Mammary epithelial cell (primary cell): ENCODE measurements at regions of chr4 and their contacts with region 1.

Region 1: DNA sequence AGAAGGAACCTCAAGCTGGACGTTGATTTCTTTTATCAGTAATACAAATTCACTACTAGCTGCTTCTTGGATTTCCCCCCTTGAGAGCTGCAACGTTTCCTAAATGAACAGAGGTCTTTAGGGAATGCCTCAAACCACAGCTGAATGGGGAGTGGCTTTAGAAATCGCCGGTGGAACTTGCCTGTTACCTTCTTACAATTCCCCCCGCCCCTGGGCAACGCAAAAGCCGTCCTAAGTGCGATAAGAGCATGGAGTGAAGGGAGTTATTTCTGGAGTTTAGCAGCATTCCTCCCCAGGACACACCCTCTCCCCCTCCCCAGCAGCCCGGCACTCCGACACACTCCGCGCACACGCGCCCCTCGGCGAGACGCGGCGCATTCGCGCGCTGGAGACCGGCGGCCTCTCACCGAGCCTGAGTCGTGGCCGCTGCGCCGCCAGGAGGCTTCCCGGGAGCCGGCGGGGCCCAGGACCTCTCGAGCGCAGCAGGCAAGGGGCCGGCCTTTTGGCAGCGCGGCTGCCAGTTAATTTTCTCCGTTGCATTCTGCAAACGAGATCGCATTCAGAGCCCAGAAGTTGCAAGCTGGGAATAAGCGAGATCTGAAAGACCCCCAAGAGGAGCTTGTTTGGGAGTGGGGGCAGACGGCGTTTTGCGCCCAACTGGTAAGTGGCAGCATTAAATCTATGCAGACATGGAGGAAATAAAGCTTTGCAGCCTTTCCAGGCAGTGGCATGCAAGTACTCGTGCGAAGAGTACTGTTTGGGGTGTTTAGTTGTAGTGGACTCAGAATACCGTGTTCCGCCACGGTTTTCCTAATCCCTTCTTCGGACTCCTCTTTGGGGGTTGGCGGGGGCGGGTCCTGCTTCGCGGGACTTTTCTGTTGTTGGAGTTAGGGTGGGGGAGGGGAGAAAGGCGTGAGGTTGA is 134.7 kb downstream of the PALLD start:
- DNase-seq: peak; percentile 80
- H3K4me3 ChIP-seq: peak overlapping the region; percentile 56 to 62 (median 61)
- H3K27ac ChIP-seq: peak overlapping the region; percentile 66
- H3K4me1 ChIP-seq: peaks cover 48% of the 10 kb centered on the region
- H3K27me3 ChIP-seq: no peaks in the 10 kb centered on the region
- CTCF ChIP-seq: peak; percentile 19 to 53

Region 2: DNA sequence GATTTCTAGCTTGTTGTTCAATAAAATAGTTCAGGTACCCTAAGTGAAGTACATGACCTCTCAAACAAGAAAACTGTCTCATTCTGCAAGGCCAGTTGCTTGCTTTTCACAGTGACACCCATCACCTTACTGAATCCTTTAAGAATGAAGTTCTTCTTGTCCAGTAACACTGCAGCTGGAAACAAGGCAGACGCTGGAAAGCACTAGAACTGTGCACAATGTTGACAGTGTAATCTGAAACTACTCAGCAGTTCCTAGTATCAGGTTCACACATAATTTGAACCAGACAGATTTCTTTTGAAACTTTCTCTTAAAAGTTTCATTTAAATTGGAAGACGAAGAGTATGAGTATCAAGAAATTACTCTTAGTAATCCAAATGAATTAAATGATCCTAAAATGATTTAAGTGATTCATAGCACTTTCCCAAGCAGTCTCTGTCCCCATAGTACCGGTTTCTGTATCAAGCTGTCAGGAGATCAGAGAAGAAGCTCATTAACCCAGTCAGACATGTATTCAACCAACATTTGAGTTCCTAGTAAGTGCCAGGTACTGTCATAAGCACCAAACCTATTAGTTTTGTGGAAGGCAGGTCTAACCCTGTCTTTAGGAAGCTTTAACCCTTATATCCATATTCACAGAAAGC is 71.2 kb before region 1 on chr4:
- CTCF ChIA-PET with region 1: no interaction called
- dilution Hi-C with region 1: loop called (anchors 5 kb)
- in situ Hi-C with region 1: no loop called
- intact Hi-C with region 1: no loop called
- DNase-seq: peak; percentile 54
- H3K4me3 ChIP-seq: no peak overlapping the region
- H3K27ac ChIP-seq: no peak overlapping the region
- H3K4me1 ChIP-seq: peaks cover 37% of the 10 kb centered on the region
- H3K27me3 ChIP-seq: no peaks in the 10 kb centered on the region
- CTCF ChIP-seq: no peak

Region 3: DNA sequence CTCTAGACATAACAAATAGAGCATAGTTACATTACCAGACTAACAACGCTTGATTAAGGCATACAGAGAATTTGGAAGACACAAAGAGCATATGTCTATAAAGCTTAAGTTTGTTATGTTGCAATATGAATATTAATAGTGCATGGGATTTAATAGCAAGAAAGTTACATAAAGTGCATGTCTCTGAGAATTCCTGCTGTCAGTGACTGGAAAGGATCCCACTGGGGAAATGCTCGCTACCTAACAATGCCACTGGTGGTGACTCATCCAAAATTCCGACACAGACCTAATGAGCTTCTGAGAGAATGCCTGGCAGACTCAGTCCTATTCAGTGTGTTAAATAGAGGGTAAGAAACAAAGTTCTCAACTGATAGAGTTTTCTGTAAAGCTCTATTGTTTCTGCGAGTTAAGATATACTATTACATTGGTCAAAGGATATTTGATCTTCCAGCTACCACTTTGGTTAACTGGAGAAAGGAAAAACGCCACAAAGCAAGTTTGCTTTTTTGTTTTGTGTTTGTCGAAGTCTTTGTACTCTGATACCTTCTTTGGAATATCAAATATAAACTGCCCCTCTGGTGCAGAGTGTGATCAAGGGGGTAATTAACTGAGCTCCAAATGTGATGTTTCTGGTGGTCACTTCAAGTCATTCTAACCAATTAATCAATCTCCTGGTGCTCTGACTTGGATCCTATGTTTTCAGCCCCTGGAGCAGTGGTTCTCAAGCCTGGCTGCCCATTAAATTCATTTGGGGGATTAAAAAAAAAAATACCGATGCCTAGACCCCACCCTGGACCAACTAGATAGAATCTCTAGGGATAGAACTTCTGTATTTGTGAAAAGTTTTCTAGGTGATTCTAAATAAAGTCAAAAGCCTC is 26.8 kb before region 1 on chr4:
- CTCF ChIA-PET with region 1: no interaction called
- dilution Hi-C with region 1: no loop called
- in situ Hi-C with region 1: no loop called
- intact Hi-C with region 1: loop called (anchors 1 kb)
- DNase-seq: peak; percentile 91
- H3K4me3 ChIP-seq: no peak overlapping the region
- H3K27ac ChIP-seq: peak overlapping the region; percentile 58
- H3K4me1 ChIP-seq: peaks cover 50% of the 10 kb centered on the region
- H3K27me3 ChIP-seq: no peaks in the 10 kb centered on the region
- CTCF ChIP-seq: no peak